HepG2 (cell line): ENCODE measurements at regions of chr6 and their contacts with region 1.

Region 1: DNA sequence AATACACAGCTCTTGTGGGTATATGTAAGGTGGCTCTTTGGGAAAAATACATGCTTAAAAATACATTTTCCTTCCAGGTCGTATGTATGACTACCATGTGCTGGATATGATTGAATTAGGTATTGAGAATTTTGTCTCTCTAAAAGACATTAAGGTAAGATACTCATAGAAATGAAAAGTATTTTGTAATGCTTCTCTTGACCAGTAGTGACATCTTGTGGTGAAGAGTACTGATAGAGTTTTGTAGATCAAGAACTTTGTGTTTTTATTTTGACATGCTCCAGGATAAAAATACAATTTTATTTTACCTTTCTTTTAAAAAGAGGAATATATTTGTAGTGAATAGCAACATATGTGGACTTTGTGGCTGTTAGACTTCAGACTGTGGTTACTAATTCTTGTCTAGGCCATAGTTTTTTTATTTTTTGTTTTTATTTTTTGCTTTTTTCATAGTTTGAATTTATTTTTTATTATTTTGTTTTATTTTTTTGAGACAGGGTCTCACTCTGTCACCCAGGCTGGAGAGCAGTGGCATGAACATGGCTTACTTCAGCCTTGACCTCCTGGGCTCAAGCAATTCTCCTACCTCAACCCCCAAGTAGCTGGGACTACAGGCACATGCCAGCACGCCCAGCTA is 17.9 kb downstream of the RPF2 start:
- DNase-seq: peak; percentile 22
- ATAC-seq: no peak
- H3K4me3 ChIP-seq: no peak overlapping the region
- H3K27ac ChIP-seq: no peak overlapping the region
- H3K4me1 ChIP-seq: peaks cover 3% of the 10 kb centered on the region
- H3K27me3 ChIP-seq: no peaks in the 10 kb centered on the region
- CTCF ChIP-seq: peak; percentile 45
- EP300 ChIP-seq: no peak
- POLR2A ChIP-seq: no peak
- RAD21 ChIP-seq: 0 out of 2 replicates have a peak, but pooled peaks have one; percentile 36

Region 2: GRCh38 chr6:110882824-110883554 is 116.8 kb before region 1 on chr6:
- CTCF ChIA-PET with region 1: no interaction called
- POLR2A ChIA-PET with region 1: no interaction called
- in situ Hi-C with region 1: no loop called
- intact Hi-C with region 1: loop called (anchors 1 kb)
- DNase-seq: no peak
- ATAC-seq: no peak
- H3K4me3 ChIP-seq: 0 out of 6 replicates have a peak overlapping the region, but pooled peaks of 1 of the 3 experiments have one; percentile 2
- H3K27ac ChIP-seq: peak overlapping the region; percentile 9
- H3K4me1 ChIP-seq: peaks cover 91% of the 10 kb centered on the region
- H3K27me3 ChIP-seq: no peaks in the 10 kb centered on the region
- CTCF ChIP-seq: no peak
- EP300 ChIP-seq: no peak
- POLR2A ChIP-seq: no peak
- RAD21 ChIP-seq: no peak

Region 3: GRCh38 chr6:110944681-110945151 is 55.0 kb before region 1 on chr6:
- CTCF ChIA-PET with region 1: no interaction called
- POLR2A ChIA-PET with region 1: no interaction called
- in situ Hi-C with region 1: no loop called
- intact Hi-C with region 1: no loop called
- DNase-seq: peak; percentile 9
- ATAC-seq: peak; percentile 36; the same call in 1 of the 3 replicates
- H3K4me3 ChIP-seq: no peak overlapping the region
- H3K27ac ChIP-seq: no peak overlapping the region
- H3K4me1 ChIP-seq: peaks cover 6% of the 10 kb centered on the region
- H3K27me3 ChIP-seq: no peaks in the 10 kb centered on the region
- CTCF ChIP-seq: no peak
- EP300 ChIP-seq: no peak
- POLR2A ChIP-seq: no peak
- RAD21 ChIP-seq: no peak

Region 4: DNA sequence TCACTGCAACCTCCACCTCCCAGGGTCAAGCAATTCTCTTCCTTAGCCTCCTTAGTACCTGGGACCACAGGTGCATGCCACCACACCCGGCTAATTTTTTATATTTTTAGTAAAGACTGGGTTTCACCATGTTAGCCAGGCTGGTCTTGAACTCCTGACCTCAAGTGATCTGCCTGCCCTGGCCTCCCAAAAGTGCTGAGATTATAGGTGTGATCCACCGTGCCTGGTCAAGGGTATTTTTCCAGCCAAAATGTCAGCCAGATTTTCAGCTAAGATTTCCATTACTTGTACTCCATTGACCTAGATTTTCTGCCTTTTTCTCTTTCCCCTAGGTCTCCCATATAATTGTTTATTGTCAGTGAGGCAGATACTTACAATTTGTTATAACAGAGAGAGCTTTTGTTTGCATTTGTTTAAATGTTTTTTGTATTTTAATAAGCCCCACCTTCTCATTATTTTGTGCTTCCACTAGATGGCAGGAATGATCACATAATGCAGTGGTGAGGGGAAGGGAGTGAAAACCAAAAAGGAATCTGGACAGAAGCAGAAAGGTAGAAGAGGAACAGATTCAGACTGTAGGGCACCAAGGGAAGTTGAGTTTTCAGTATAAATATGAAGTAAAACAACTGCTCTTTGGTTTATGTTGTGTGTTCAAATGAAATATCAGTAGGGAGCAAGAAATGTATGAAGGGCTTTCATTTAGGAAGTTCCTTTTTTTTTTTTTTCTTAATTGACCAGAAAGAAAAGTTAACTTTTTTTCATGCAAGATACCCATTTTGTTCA is 11.8 kb after region 1 on chr6:
- CTCF ChIA-PET with region 1: no interaction called
- POLR2A ChIA-PET with region 1: no interaction called
- in situ Hi-C with region 1: no loop called
- intact Hi-C with region 1: no loop called
- DNase-seq: peak; percentile 32
- ATAC-seq: peak; percentile 82
- H3K4me3 ChIP-seq: no peak overlapping the region
- H3K27ac ChIP-seq: no peak overlapping the region
- H3K4me1 ChIP-seq: no peaks in the 10 kb centered on the region
- H3K27me3 ChIP-seq: no peaks in the 10 kb centered on the region
- CTCF ChIP-seq: peak; percentile 69
- EP300 ChIP-seq: no peak
- POLR2A ChIP-seq: no peak
- RAD21 ChIP-seq: peak; percentile 41; the same call in 1 of the 2 replicates